Posterior vena cava (tissue), 2 donors: ENCODE measurements at regions of chr13 and their contacts with region 1.

Region 1: GRCh38 chr13:47326061-47326460 is 429.2 kb upstream of the HTR2A start:
- DNase-seq: no peak

Region 2: DNA sequence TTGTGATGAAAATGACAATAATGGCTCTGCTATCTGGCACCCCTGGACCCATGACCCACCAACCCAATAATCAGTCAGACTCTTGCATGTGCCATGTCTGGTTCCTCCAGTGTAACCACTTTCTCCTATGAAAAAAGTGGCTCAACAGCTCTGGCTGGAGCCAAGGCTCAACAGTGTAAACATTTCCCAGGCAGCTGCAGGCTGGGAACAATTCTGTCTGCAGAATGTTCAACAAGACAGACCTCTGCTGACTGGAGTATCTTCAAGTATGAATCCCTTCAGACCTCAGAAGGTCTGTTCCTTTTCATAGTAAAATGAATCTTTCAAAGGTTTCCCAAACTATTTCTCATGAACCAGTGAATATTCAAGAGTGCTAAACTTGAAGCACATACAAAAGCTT is 19.1 kb before region 1 on chr13:
- intact Hi-C with region 1: loop called in 1 of 2 experiments (anchors 2 kb)
- DNase-seq: no peak

Region 3: DNA sequence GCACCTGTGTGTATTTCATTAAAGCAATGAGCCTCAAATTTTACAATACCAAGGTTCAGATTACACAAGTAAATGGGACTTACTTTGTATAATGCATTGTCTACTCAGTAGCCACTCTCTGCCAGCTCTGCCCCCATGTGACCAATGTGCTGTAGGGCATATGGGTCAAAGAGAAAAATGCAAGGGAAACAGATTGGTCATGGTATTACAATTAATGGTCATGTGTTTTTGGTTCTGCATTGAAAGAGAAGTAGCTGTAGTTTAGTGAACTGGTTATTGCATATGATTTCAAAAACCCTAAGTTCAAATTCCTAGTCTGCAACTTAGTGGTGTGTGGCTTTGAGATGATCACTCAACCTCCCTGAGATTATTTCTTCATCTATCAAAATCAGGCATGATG is 129.6 kb after region 1 on chr13:
- intact Hi-C with region 1: no loop called
- DNase-seq: no peak